MCF 10A (cell line): ENCODE measurements at regions of chr19 and their contacts with region 1.

Region 1: DNA sequence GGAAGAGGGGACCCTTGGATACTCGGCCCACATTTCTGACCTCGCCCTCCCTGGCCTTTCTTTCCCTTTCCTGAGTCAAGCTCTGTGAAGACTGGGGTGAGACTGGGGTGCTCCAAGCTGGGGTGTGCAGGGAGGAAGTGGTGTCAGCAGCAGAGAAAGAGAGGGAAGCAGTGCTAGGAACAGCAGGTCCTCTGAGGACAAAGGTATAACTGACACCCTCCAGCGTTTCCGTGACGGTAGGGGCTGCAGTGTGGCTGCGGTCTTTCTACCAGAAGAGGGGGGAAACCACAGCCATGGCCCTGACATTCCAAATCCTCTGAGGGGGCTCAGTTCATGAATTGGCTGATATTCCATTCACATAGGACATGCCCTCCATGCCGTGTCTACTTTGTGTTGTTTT is 1.1 kb downstream of the KIR3DL2 start:
- DNase-seq: no peak
- H3K4me3 Mint-ChIP-seq: no peak overlapping the region
- H3K27ac Mint-ChIP-seq: no peak overlapping the region
- H3K4me1 Mint-ChIP-seq: no peaks in the 10 kb centered on the region
- H3K27me3 Mint-ChIP-seq: no peaks in the 10 kb centered on the region
- CTCF ChIP-seq: no peak

Region 2: GRCh38 chr19:54738715-54739114 is 112.6 kb before region 1 on chr19:
- CTCF ChIA-PET with region 1: no interaction called
- POLR2A ChIA-PET with region 1: no interaction called
- intact Hi-C with region 1: loop called (anchors 5 kb)
- DNase-seq: no peak
- H3K4me3 Mint-ChIP-seq: no peak overlapping the region
- H3K27ac Mint-ChIP-seq: no peak overlapping the region
- H3K4me1 Mint-ChIP-seq: no peaks in the 10 kb centered on the region
- H3K27me3 Mint-ChIP-seq: no peaks in the 10 kb centered on the region
- CTCF ChIP-seq: no peak

Region 3: DNA sequence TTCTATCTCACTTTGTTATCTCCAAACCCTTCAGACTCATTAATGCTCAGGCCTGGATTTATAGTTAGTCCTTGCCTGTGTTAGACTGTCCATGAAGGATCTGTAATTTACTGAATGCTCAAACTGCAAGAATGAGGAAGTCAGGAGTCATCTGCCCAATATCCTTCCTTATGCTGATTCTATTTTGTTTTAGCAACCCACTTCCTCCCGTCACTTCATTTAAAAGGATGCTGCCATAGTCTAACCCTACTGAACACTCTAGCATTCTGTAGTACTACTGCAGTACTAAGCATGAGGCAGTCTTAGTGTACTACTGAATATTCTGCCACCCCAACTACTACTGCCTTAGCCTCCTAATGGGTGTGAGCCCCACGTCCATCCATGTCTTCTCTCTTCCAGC is 24.2 kb after region 1 on chr19:
- CTCF ChIA-PET with region 1: no interaction called
- POLR2A ChIA-PET with region 1: no interaction called
- intact Hi-C with region 1: no loop called
- DNase-seq: no peak
- H3K4me3 Mint-ChIP-seq: no peak overlapping the region
- H3K27ac Mint-ChIP-seq: no peak overlapping the region
- H3K4me1 Mint-ChIP-seq: no peaks in the 10 kb centered on the region
- H3K27me3 Mint-ChIP-seq: no peaks in the 10 kb centered on the region
- CTCF ChIP-seq: no peak